ENCODE measurements at regions of chr14 and their contacts with region 1.

Region 1: GRCh38 chr14:94136575-94137331 is 7.3 kb upstream of the IFI27L2 start:
- DNase-seq: peak; percentile 93
- H3K4me3 Mint-ChIP-seq: no peak overlapping the region
- H3K27ac Mint-ChIP-seq: no peak overlapping the region
- H3K4me1 Mint-ChIP-seq: peaks cover 3% of the 10 kb centered on the region
- H3K27me3 Mint-ChIP-seq: no peaks in the 10 kb centered on the region

Region 2: DNA sequence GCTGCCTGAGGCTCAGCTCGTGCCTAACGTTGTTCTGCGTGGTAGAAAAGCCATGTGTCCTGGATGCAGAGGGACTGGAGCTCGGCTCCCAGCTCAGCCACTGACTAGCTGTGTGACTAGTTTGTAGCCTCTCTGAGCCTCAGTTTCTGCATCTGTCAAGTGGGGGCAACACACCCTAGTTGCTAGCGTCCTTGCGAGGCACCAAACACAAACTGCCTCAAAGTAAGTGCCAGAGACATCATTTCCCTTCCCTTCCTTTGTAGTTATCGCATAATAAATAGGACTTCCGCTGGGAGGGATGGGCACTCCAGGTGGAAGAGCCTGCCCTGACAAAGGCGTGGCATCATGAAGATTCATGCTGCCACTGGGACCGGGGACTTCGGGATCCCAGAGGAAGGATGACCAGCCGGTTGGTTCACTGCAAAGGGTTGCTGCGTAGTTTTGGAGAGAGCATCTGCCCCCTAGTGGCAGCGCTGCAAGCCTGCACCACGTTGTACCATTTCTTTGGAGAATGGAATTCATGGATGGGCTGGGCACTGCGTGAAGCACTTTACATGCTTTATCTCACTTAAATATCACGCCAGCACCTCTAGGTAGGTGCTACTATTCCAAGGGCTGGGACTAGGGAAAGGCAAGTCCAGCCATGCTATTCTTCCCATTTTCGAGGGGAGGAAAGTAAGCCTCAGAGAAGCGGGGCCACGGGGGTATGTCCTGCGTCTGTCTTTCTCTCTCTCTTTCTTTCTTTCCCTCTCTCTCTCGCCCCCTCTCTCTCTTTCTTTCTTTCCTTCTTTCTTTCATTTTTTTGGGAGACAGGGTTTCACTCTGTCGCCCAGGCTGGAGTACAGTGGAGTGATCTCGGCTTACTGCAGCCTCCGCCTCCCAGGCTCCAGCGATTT is 135.0 kb before region 1 on chr14:
- CTCF ChIA-PET with region 1: interaction called, 12 read pairs
- POLR2A ChIA-PET with region 1: no interaction called
- intact Hi-C with region 1: no loop called
- DNase-seq: peak; percentile 72
- H3K4me3 Mint-ChIP-seq: no peak overlapping the region
- H3K27ac Mint-ChIP-seq: peak overlapping the region; percentile 50
- H3K4me1 Mint-ChIP-seq: peaks cover 29% of the 10 kb centered on the region
- H3K27me3 Mint-ChIP-seq: no peaks in the 10 kb centered on the region

Region 3: DNA sequence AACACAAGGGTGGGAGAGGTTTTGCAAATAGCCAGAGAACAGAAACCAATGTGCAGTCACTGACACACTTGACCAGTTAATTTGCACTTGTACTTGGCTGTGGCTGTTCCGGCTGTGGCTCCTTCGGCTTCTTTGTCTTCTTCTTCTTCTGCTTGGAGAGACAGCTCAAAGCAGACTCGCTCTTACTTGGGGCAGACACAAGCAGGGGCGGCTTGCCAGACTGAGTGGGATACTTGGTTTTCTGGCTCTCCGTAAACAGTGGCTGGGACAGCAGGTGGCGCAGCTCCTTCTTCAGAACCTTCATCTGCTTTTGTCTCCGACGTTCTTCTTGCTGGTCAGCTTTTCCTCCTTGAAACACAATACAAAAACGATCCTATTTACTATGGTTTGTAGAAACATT is 85.6 kb before region 1 on chr14:
- CTCF ChIA-PET with region 1: interaction called, 32 read pairs
- POLR2A ChIA-PET with region 1: no interaction called
- intact Hi-C with region 1: no loop called
- DNase-seq: peak; percentile 14
- H3K4me3 Mint-ChIP-seq: no peak overlapping the region
- H3K27ac Mint-ChIP-seq: peak overlapping the region; percentile 23
- H3K4me1 Mint-ChIP-seq: peaks cover 23% of the 10 kb centered on the region
- H3K27me3 Mint-ChIP-seq: no peaks in the 10 kb centered on the region

Region 4: GRCh38 chr14:94080471-94081289 is 56.1 kb before region 1 on chr14 and contains the start of gene DDX24:
- CTCF ChIA-PET with region 1: interaction called, 15 read pairs
- POLR2A ChIA-PET with region 1: no interaction called
- intact Hi-C with region 1: no loop called
- DNase-seq: peak; percentile 98
- H3K4me3 Mint-ChIP-seq: peak within 1 kb of the TSS; percentile 99
- H3K27ac Mint-ChIP-seq: peak within 1 kb of the TSS; percentile 99
- H3K4me1 Mint-ChIP-seq: peaks cover 50% of the 10 kb centered on the region
- H3K27me3 Mint-ChIP-seq: no peaks in the 10 kb centered on the region
- total RNA-seq, gene DDX24: 241 to 252 TPM

Region 5: GRCh38 chr14:94180655-94181271 is 44.0 kb after region 1 on chr14:
- CTCF ChIA-PET with region 1: interaction called, 82 read pairs
- POLR2A ChIA-PET with region 1: no interaction called
- intact Hi-C with region 1: loop called (anchors 1 kb)
- DNase-seq: no peak
- H3K4me3 Mint-ChIP-seq: peak overlapping the region; percentile 54
- H3K27ac Mint-ChIP-seq: peak overlapping the region; percentile 67
- H3K4me1 Mint-ChIP-seq: peaks cover 50% of the 10 kb centered on the region
- H3K27me3 Mint-ChIP-seq: no peaks in the 10 kb centered on the region

Measured in activated CD4-positive, alpha-beta memory T cell treated with anti-CD3 and anti-CD28 coated beads for 36 hours (primary cell).